BJ (cell line): ENCODE measurements at regions of chr6 and their contacts with region 1.

Region 1: DNA sequence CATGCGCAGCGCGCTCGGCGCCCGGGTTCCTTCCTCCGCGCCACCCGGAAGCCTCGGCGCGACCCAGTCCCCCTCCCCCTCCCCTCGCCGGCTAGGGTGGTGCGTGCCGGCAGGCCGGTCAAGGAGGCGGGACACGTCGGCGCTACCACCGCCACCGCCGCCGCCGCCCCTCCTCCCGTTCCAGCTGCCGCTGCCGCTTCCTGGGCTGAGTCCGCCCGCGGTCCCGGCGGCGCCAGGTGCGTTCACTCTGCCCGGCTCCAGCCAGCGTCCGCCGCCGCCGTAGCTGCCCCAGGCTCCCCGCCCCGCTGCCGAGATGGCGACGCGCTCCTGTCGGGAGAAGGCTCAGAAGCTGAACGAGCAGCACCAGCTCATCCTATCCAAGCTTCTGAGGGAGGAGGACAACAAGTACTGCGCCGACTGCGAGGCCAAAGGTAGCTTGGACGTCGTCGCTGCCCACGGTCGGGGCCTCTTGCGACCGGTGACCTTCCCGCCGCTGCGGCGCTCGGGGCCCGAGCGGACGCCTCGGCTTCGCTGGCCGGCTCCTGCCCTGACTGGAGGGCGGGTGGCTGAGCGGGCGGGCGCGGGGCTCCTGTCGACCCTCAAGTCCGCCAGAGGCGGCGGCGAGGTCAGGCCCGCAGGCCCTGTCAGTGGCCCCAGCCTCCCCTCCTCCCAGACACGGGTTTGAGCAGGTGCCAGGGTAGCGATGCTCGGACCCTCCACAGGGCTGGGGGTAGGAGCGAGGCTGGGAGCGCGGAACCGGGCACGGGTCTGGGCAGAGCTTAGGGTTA is at the start of gene SMAP1:
- DNase-seq: peak; percentile 45
- H3K4me3 ChIP-seq: peak within 1 kb of the TSS; percentile 99
- H3K27me3 ChIP-seq: no peaks in the 10 kb centered on the region
- CTCF ChIP-seq: no peak
- polyA plus RNA-seq, gene SMAP1: 23.3 and 24.6 TPM in 2 replicates

Region 2: DNA sequence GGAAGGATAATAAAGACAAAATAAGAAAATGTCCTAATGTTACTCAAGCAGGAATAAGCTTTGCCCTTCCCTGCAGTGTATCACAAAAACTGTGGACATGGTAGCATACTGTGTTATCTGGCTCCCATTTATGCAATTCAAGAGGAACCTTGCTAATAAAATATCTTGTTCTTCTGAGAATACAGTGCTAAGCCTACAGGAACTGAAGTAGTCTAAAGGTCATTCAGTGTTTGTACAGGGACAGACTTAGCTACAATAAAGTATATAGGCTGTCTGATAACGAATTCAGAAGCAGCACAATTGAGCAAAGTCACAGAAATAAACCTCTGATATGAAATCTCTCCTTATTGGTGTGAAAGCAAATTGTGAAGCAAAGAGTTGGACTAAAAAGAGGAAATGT is 160.7 kb before region 1 on chr6:
- CTCF ChIA-PET with region 1: no interaction called
- POLR2A ChIA-PET with region 1: no interaction called
- DNase-seq: no peak
- H3K4me3 ChIP-seq: no peak overlapping the region
- H3K27me3 ChIP-seq: no peaks in the 10 kb centered on the region
- CTCF ChIP-seq: no peak

Region 3: DNA sequence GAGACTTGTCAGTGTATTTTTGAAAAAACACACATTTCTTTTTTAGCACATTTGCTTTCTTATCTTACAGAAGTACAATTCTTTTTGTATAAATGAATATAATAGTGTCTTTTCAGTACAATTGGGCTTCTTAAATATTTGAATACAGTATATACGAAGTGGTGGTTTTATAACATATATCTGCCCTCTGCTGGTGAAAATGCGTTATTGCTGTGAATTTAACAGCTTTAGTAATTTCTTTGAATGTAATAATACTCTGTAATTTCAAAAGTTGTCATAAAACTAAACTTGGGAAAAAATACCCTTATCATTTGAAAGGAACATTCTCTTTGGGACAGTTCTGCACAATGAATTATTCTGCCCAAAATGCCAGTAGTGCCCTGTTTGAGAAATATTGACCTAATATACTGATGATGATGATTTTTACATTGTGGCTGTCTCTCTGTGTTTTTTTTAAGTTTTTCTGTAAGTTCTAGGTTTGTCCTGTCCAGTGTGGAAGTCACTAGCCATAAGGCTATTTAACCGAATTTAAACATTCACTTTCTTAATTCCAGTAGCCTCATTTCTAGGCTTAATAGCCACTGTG is 18.7 kb after region 1 on chr6:
- CTCF ChIA-PET with region 1: interaction called, 18 read pairs
- POLR2A ChIA-PET with region 1: interaction called, 3 read pairs
- DNase-seq: no peak
- H3K4me3 ChIP-seq: no peak overlapping the region
- H3K27me3 ChIP-seq: no peaks in the 10 kb centered on the region
- CTCF ChIP-seq: peak; percentile 55; the same call in 1 of the 2 replicates